Heart right ventricle (tissue), 16 donors: ENCODE measurements at regions of chr6 and their contacts with region 1.

Region 1: DNA sequence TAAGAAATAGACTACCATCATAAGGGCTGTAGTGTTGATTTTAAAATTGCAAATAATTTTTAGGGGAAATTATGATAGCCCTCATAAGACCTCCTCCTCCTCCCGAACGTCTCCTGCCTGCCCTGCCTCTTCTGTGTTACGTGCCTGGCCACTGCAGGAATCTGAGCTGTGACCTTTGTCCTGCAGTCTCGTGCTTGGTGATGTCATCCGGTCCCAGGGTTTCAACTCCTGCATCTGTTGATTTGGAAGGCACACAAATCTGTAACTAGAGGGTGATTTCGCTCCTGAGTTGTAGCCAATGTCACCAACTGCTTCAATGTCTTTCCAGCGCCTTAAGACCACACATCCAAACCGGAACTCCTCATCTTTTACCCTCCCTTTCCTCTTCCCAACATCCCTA is 163.2 kb downstream of the AIG1 start:
- DNase-seq: peak; percentile 57 to 70
- ATAC-seq: peak; percentile 69 to 89 (median 76)
- H3K4me3 ChIP-seq: no peak overlapping the region
- H3K27ac ChIP-seq: peak overlapping the region; percentile 45 to 87 (median 74)
- H3K4me1 ChIP-seq: peaks cover 13 to 39% (median 34%) of the 10 kb centered on the region in 9 donors
- H3K27me3 ChIP-seq: no peaks in the 10 kb centered on the region
- CTCF ChIP-seq: no peak

Region 2: DNA sequence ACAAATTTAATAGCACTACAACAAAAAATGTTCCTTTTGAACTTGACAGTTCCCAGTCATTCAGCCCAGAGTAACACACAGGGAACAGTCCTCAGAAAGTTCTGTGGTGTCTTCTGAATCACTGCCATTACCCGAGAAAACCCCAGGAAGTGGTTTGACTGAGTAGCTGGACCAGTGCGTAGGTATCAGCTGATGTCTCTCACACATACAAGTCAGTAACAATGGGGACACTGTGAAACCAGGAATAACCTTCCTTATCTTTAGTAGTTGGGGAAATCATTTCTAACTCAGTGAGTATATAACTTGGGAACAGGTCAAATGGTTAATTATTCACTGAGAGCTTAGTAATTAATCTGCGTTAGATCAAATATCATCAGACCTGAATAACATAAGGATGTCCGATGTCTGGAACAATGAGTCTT is 352.0 kb before region 1 on chr6:
- intact Hi-C with region 1: no loop called
- DNase-seq: peak in 1 of 2 donors; percentile 56
- ATAC-seq: peak; percentile 60 to 93 (median 84)
- H3K4me3 ChIP-seq: peak overlapping the region in 1 of 10 donors; percentile 5
- H3K27ac ChIP-seq: peak overlapping the region; percentile 5 to 77 (median 56)
- H3K4me1 ChIP-seq: peaks cover 6 to 80% (median 65%) of the 10 kb centered on the region in 9 donors
- H3K27me3 ChIP-seq: no peaks in the 10 kb centered on the region
- CTCF ChIP-seq: no peak

Region 3: DNA sequence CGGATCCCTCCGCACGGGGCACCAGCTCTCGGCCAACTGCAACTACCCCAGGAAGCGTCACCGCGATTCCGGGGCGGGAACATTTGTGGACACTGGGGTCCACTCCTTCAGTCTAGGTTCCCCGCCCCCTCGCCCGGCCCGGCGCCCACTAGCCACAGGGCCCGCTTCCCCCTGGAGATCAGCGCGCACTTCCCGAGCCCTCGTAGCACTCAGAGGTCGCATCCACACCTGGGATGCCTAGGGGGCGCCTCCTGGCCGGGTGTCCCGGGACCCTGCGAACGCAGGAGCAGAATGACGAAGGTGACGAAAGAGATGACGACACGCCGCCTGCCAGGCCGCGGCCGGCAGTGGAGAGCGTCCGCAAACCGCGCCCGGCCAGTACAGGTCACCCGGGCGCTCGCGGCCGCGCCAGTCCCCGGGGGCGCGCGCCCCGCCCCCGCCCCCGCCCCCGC is 163.5 kb before region 1 on chr6:
- intact Hi-C with region 1: loop called in 3 of 10 experiments (anchors 5 to 10 kb)
- DNase-seq: peak; percentile 81 to 83
- ATAC-seq: peak; percentile 90 to 95 (median 92)
- H3K4me3 ChIP-seq: peak overlapping the region; percentile 77 to 96 (median 83)
- H3K27ac ChIP-seq: peak overlapping the region; percentile 90 to 97 (median 94)
- H3K4me1 ChIP-seq: peaks cover 0 to 30% (median 21%) of the 10 kb centered on the region in 9 donors
- H3K27me3 ChIP-seq: no peaks in the 10 kb centered on the region
- CTCF ChIP-seq: peak in 5 of 9 donors; percentile 6 to 35 (median 18)

Region 4: GRCh38 chr6:143160439-143161220 is 63.3 kb before region 1 on chr6:
- intact Hi-C with region 1: loop called in 1 of 10 experiments (anchors 2 kb)
- DNase-seq: no peak
- ATAC-seq: peak in 7 of 8 donors; percentile 27 to 85 (median 61)
- H3K4me3 ChIP-seq: no peak overlapping the region
- H3K27ac ChIP-seq: peak overlapping the region in 1 of 10 donors; percentile 35
- H3K4me1 ChIP-seq: peaks cover 0 to 59% (median 17%) of the 10 kb centered on the region in 9 donors
- H3K27me3 ChIP-seq: no peaks in the 10 kb centered on the region
- CTCF ChIP-seq: no peak

Region 5: DNA sequence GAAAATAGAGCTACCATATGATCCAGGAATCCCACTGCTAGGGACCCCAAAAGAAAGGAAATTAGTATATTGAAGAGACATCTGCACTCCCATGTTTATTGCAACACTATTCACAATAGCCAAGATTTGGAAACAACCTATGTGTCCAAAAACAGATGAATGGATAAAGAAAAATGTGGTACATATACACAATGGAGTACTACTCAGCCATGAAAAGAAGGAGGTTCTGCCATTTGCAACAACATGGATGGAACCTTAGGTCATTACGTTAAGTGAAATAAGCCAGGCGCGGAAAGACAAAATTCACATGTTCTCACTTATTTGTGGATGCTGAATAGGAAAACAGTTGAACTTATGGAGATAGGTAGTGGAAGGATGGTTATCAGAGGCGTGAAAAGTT is 89.3 kb after region 1 on chr6:
- intact Hi-C with region 1: no loop called
- DNase-seq: no peak
- ATAC-seq: no peak
- H3K4me3 ChIP-seq: no peak overlapping the region
- H3K27ac ChIP-seq: no peak overlapping the region
- H3K4me1 ChIP-seq: no peaks in the 10 kb centered on the region
- H3K27me3 ChIP-seq: no peaks in the 10 kb centered on the region
- CTCF ChIP-seq: no peak